ENCODE measurements at regions of chr12 and their contacts with region 1.

Region 1: DNA sequence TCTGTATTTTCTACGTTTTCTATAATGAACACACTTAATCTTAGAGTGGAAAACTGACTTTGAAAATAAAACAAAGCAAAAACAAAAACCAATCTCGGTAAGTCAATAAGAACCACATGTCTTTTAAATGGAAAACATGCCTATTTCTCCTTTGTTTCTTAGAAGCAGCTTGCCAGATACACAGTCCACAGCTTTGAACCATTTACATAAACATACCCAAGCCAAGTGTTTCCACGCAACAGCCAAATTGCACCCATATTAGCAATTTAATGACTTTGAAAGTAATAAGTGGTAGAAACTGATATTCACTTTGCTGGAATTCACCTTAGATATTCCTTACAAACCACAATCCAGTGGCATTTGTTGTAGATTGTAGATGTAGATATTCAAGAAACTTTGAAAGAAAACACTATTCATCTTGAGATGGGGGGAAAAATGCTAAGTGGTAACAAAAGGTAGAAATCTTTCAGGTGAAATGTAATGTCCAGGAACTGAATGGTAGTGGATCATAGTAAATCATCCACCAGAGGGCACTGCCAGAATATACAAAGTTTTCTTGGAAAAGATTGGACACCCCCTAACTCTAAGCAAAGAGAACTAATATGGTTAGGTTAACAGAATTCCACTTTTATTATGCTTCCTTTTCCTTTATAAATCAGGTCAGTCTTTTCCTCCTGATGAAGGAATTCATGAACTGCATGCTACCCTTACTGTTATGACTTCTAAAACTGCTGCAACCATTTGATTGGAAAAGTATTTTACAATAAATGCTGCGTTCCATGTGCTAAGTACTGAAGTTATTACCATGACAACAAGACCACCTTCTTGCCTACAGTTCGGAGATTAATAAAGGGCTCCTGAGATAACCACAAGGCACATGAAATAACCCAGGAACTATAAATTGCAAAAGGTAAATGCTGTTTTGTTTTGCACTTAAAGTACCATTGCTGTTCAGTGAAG is 69.8 kb downstream of the RERG start:
- DNase-seq: peak in 1 of 2 experiments; percentile 33
- H3K4me3 ChIP-seq: no peak overlapping the region
- H3K4me3 Mint-ChIP-seq: no peak overlapping the region
- H3K27ac Mint-ChIP-seq: no peak overlapping the region
- H3K4me1 ChIP-seq: no peaks in the 10 kb centered on the region
- H3K4me1 Mint-ChIP-seq: no peaks in the 10 kb centered on the region
- H3K27me3 ChIP-seq: 0 out of 2 replicates have a peak, but pooled peaks cover 1% of the 10 kb centered on the region
- H3K27me3 Mint-ChIP-seq: peaks cover 3% of the 10 kb centered on the region
- CTCF ChIP-seq: peak; percentile 48 to 67

Region 2: GRCh38 chr12:15001733-15002382 is 149.6 kb before region 1 on chr12:
- CTCF ChIA-PET with region 1: no interaction called
- POLR2A ChIA-PET with region 1: no interaction called
- intact Hi-C with region 1: loop called (anchors 5 kb)
- DNase-seq: no peak
- H3K4me3 ChIP-seq: no peak overlapping the region
- H3K4me3 Mint-ChIP-seq: no peak overlapping the region
- H3K27ac Mint-ChIP-seq: no peak overlapping the region
- H3K4me1 ChIP-seq: 0 out of 2 replicates have a peak, but pooled peaks cover 4% of the 10 kb centered on the region
- H3K4me1 Mint-ChIP-seq: peaks cover 7% of the 10 kb centered on the region
- H3K27me3 ChIP-seq: peaks cover 2% of the 10 kb centered on the region; the same call in 1 of the 2 replicates
- H3K27me3 Mint-ChIP-seq: peaks cover 29% of the 10 kb centered on the region
- CTCF ChIP-seq: no peak

Region 3: DNA sequence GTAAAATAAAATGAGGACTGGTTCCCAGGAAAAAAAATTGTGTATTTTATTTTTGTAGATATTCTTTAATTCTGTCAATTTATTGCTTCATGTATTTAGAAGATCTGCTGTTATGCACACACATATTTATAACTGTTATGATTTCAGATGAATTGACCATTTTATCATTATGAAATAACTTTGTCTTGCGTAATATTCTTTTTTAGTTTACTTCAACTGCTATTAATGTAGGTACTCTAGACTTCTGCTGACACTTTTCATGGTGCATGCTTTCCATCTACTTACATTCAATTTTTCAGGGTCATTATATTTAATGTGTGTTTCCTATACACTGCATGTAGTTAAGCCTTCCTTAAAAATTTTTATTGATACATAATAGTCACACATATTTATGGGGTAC is 92.3 kb before region 1 on chr12:
- CTCF ChIA-PET with region 1: no interaction called
- POLR2A ChIA-PET with region 1: no interaction called
- intact Hi-C with region 1: no loop called
- DNase-seq: no peak
- H3K4me3 ChIP-seq: no peak overlapping the region
- H3K4me3 Mint-ChIP-seq: no peak overlapping the region
- H3K27ac Mint-ChIP-seq: no peak overlapping the region
- H3K4me1 ChIP-seq: no peaks in the 10 kb centered on the region
- H3K4me1 Mint-ChIP-seq: no peaks in the 10 kb centered on the region
- H3K27me3 ChIP-seq: no peaks in the 10 kb centered on the region
- H3K27me3 Mint-ChIP-seq: peaks cover 30% of the 10 kb centered on the region
- CTCF ChIP-seq: no peak

Region 4: DNA sequence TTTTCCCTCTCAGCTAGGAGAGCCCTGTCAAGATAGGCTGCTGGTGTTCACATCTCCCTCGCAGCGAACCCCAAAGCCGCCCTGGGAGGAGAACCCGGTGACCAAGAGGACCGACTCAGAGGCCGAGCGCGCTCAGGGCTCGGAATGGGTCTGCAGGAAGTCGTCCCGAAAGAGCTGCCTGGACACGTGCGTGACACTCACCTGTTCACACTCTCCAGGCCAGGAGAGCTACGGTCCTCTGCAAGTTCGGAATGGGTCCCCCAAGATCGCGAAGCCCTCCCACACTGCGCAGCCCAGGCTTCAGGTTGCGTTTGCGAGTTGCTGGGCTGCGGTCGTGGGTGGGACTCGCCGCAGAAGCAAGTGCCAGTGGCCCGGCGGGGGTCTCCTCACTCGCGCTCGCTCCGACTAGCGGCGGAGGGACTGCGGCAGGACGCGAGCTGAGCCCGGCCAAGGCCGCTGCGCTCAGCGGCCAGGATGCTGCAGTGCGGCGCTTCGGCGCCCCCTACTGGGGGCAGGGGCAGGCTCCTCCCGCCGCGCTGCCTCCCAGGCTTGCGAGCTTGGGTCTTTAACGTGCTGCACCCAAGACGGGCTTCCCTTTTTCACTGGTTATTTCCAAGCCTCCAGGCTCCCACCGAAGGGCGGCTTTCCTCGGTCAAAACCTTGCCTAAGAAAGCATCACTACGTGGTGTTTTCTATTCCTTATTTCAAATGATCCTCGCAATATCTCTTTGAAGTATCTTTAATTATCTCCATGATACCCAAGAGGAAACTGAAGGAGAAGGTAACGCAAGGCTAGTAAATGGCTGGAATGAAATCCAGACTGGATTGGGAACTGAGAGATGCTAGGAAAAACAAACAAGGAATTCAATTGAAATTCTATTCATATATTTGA is 69.8 kb after region 1 on chr12 and contains the start of gene RERG:
- CTCF ChIA-PET with region 1: no interaction called
- POLR2A ChIA-PET with region 1: no interaction called
- intact Hi-C with region 1: loop called (anchors 1 kb)
- DNase-seq: peak in 1 of 2 experiments; percentile 74
- H3K4me3 ChIP-seq: peak within 1 kb of the TSS; percentile 24
- H3K4me3 Mint-ChIP-seq: no peak within 1 kb of the TSS
- H3K27ac Mint-ChIP-seq: no peak within 1 kb of the TSS
- H3K4me1 ChIP-seq: no peaks in the 10 kb centered on the region
- H3K4me1 Mint-ChIP-seq: no peaks in the 10 kb centered on the region
- H3K27me3 ChIP-seq: no peaks in the 10 kb centered on the region
- H3K27me3 Mint-ChIP-seq: peaks cover 6% of the 10 kb centered on the region
- CTCF ChIP-seq: peak; percentile 68 to 80
- total RNA-seq, gene RERG: 0.37 TPM in 1 of 2 replicates, not detected in the other

Region 5: DNA sequence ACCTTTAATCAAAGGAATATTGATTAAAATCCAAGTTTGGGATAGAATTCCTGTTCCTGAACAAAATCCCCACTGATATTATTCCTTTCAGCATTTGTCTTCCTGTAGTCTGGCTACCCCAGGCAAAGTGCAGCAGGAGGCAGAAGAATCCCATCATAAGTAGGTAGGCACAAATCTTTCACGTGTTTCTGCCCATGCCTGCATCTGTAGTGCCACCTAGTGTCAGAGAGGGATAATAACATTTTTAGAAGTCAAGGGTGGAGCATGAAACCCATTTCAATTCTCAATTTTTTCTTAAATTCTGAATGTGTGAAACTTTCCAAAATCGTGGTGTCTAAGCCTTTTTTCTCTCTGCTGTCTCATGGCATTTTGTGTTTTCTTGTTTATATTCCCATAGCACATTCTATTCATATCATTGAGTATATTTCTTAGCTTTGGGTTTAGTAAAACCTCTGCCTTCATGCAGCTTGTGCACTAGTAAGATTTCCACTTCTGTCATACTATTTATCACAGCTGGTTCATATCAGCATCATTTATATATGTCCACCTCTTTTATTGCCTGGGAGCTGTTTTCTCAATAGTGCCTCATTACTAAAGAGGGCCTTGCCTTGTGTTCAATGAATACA is 117.6 kb after region 1 on chr12:
- CTCF ChIA-PET with region 1: no interaction called
- POLR2A ChIA-PET with region 1: no interaction called
- intact Hi-C with region 1: loop called (anchors 1 kb)
- DNase-seq: peak; percentile 71 to 72
- H3K4me3 ChIP-seq: no peak overlapping the region
- H3K4me3 Mint-ChIP-seq: no peak overlapping the region
- H3K27ac Mint-ChIP-seq: no peak overlapping the region
- H3K4me1 ChIP-seq: no peaks in the 10 kb centered on the region
- H3K4me1 Mint-ChIP-seq: no peaks in the 10 kb centered on the region
- H3K27me3 ChIP-seq: no peaks in the 10 kb centered on the region
- H3K27me3 Mint-ChIP-seq: no peaks in the 10 kb centered on the region
- CTCF ChIP-seq: peak; percentile 87 to 96

Region 6: DNA sequence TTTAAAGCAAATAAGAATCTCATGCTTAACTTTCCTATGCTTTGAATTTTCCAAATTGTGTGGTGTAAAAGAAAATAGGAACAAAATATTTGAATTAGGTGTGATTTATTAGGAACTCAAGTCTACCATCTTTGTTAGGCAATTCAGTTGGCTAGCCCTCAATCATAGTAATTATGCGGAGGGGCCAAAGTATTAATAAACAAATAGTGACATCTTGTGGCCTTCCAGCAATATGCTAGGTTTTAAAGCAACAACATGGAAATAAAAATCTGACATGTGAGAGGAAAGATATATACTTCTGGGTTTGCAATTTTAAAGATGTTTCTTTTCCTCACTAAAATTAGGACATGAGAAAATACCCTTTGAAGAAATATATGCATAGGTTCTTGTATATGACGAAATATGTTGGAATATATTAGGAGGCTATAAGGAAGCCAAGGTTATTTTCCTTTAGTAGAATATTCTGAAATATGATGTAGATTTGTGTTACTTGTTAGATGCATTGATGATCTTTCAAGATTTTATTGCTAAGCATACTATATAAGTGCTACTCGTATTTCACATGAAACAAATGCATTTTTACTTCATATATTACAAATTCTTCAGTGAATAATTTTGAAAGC is 371.2 kb after region 1 on chr12:
- CTCF ChIA-PET with region 1: no interaction called
- POLR2A ChIA-PET with region 1: no interaction called
- intact Hi-C with region 1: loop called (anchors 5 kb)
- DNase-seq: peak in 1 of 2 experiments; percentile 48
- H3K4me3 ChIP-seq: no peak overlapping the region
- H3K4me3 Mint-ChIP-seq: no peak overlapping the region
- H3K27ac Mint-ChIP-seq: no peak overlapping the region
- H3K4me1 ChIP-seq: no peaks in the 10 kb centered on the region
- H3K4me1 Mint-ChIP-seq: no peaks in the 10 kb centered on the region
- H3K27me3 ChIP-seq: no peaks in the 10 kb centered on the region; the same call in 1 of the 2 replicates
- H3K27me3 Mint-ChIP-seq: peaks cover 17% of the 10 kb centered on the region
- CTCF ChIP-seq: peak; percentile 59 to 70

Region 7: DNA sequence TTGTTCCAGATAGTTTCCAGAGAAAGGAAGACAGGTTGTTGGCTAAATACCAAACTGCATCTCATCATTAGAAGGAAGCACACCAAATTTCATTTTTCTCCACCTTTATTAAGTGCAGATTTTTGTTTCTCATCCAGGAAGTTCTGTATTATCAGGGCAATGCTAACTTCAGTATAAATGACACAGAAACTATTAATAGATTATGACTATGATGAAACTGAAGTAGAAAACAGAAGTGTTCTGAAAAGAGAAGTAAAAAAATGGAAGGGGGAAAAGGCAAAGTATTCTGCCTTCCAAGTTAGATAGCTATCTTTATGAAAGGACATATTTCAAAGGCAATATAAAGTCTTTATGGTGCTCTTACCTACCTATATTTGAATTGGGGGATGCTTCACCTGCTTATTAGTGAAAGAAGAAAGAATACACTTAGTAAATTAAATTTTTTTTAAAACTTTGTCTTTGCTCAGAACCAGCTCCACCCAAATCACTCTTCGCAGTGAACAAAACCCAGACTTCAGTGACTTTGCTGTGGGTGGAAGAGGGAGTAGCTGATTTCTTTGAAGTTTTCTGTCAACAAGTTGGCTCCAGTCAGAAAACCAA is 394.8 kb after region 1 on chr12:
- CTCF ChIA-PET with region 1: no interaction called
- POLR2A ChIA-PET with region 1: no interaction called
- intact Hi-C with region 1: no loop called
- DNase-seq: no peak
- H3K4me3 ChIP-seq: no peak overlapping the region
- H3K4me3 Mint-ChIP-seq: no peak overlapping the region
- H3K27ac Mint-ChIP-seq: no peak overlapping the region
- H3K4me1 ChIP-seq: no peaks in the 10 kb centered on the region
- H3K4me1 Mint-ChIP-seq: no peaks in the 10 kb centered on the region
- H3K27me3 ChIP-seq: no peaks in the 10 kb centered on the region; the same call in 1 of the 2 replicates
- H3K27me3 Mint-ChIP-seq: peaks cover 16% of the 10 kb centered on the region
- CTCF ChIP-seq: no peak

Measured in Caco-2 (cell line).